ENCODE measurements at regions of chr6 and their contacts with region 1.

Region 1: GRCh38 chr6:44221291-44221960 is 2.0 kb upstream of the SLC29A1 start:
- DNase-seq: no peak
- ATAC-seq: peak; percentile 65
- H3K4me3 ChIP-seq: peak overlapping the region; percentile 1 to 83; a peak in 3 of 4 replicates
- H3K27ac ChIP-seq: peak overlapping the region; percentile 78
- H3K4me1 ChIP-seq: peaks cover 62% of the 10 kb centered on the region
- H3K27me3 ChIP-seq: no peaks in the 10 kb centered on the region
- CTCF ChIP-seq: peak; percentile 95

Region 2: GRCh38 chr6:44172731-44173500 is 48.5 kb before region 1 on chr6:
- CTCF ChIA-PET with region 1: no interaction called
- POLR2A ChIA-PET with region 1: interaction called, 14 read pairs
- in situ Hi-C with region 1: no loop called
- intact Hi-C with region 1: loop called (anchors 5 kb)
- DNase-seq: peak; percentile 73
- ATAC-seq: peak; percentile 94
- H3K4me3 ChIP-seq: no peak overlapping the region
- H3K27ac ChIP-seq: peak overlapping the region; percentile 64
- H3K4me1 ChIP-seq: peaks cover 28% of the 10 kb centered on the region
- H3K27me3 ChIP-seq: no peaks in the 10 kb centered on the region
- CTCF ChIP-seq: peak; percentile 94

Region 3: GRCh38 chr6:44179072-44179536 is 42.3 kb before region 1 on chr6:
- CTCF ChIA-PET with region 1: interaction called, 10 read pairs
- POLR2A ChIA-PET with region 1: interaction called, 3 read pairs
- in situ Hi-C with region 1: no loop called
- intact Hi-C with region 1: loop called (anchors 5 kb)
- DNase-seq: peak; percentile 43
- ATAC-seq: peak; percentile 75
- H3K4me3 ChIP-seq: no peak overlapping the region; a peak in 1 of 4 replicates
- H3K27ac ChIP-seq: peak overlapping the region; percentile 90
- H3K4me1 ChIP-seq: peaks cover 44% of the 10 kb centered on the region
- H3K27me3 ChIP-seq: no peaks in the 10 kb centered on the region
- CTCF ChIP-seq: no peak

Region 4: DNA sequence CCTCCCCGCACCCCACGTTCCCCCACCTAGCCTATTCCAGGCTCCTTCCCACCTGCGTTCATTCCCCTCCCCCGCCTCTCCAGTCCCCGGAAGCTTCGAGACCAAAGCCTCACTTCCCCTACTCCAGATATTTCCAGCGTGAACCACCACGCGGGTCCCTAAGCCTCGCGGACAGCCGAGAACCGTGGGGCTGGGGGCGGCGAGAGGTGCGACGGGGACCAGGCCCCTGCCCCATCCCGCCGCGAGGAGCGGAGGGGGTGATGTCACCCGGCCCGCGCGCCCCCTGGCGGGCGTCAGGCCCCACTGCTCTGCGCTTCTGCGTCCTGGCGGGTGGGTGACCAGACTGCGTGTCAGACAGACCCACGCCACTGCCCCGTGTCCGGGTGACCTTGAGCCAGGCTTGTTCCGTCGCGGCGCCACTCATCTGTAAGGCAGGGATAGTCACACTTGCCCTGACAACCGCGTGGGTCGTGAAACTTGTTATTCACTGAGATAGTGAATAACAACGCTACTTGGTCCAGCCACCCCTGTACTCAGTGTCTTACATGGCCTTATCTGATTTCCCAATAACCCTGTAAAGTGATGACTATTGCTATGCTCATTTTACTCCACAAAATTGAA is 16.5 kb after region 1 on chr6:
- CTCF ChIA-PET with region 1: interaction called, 11 read pairs
- POLR2A ChIA-PET with region 1: interaction called, 3 read pairs
- in situ Hi-C with region 1: no loop called
- intact Hi-C with region 1: loop called (anchors 1 kb)
- DNase-seq: no peak
- ATAC-seq: peak; percentile 80
- H3K4me3 ChIP-seq: peak overlapping the region; percentile 49 to 67
- H3K27ac ChIP-seq: peak overlapping the region; percentile 92
- H3K4me1 ChIP-seq: peaks cover 53% of the 10 kb centered on the region
- H3K27me3 ChIP-seq: no peaks in the 10 kb centered on the region
- CTCF ChIP-seq: peak; percentile 98

Region 5: GRCh38 chr6:44257025-44257752 is 35.8 kb after region 1 on chr6 and contains the start of gene SLC35B2:
- CTCF ChIA-PET with region 1: interaction called, 3 read pairs
- POLR2A ChIA-PET with region 1: interaction called, 13 read pairs
- in situ Hi-C with region 1: no loop called
- intact Hi-C with region 1: no loop called
- DNase-seq: no peak
- ATAC-seq: peak; percentile 75
- H3K4me3 ChIP-seq: peak within 1 kb of the TSS; percentile 87 to 95
- H3K27ac ChIP-seq: peak within 1 kb of the TSS; percentile 83
- H3K4me1 ChIP-seq: peaks cover 42% of the 10 kb centered on the region
- H3K27me3 ChIP-seq: no peaks in the 10 kb centered on the region
- CTCF ChIP-seq: peak; percentile 98
- total RNA-seq, gene SLC35B2: 105 TPM

Measured in Panc1 (cell line).